Naive thymus-derived CD4-positive, alpha-beta T cell (primary cell): ENCODE measurements at regions of chr5 and their contacts with region 1.

Region 1: DNA sequence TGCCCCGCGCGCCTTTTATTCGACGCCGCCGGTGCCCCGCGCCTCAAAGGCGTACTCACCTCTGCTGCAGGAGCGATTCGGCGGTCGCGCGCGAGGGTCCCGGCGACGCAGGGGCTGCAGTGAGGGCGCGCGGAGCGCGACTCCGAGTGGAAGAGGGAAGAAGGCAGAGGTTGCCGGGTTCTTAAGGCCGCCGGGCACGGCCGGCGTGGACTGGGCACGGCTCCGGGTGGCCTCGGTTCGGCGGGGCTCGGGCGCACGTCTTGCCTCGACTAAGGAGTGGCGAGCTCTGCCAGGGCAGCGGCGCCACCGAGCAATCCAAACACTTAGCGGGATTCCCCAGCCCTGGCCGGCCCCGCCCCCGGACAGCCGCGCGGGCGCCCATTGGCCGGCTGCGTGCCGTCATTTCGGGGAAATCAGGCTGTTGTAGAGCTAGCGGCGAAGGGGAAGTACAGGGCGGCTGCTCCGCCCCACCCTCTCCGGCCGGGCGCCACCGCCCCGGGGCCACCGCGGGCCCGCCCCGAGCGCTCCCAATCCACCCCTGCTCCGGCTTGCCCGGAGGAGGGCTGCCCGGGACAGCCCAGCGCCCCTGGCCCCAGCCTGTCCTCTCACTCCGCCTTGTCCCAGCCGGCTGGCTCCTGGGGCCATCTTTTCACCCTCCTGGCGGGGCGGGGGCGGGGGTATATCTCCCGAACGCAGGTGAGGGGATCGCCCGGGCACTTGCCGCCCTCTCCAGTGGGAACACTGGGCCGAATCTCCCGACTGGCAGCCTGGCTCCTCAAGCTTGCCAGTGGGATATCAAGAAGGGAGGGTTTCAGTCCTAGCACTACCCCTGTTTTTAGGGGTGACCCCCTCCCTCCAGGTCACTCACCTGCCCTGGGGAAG is at the start of gene IRF1:
- DNase-seq: peak; percentile 97 to 100 (median 99)
- ATAC-seq: peak; percentile 89
- H3K4me3 ChIP-seq: peak within 1 kb of the TSS; percentile 78
- H3K4me3 Mint-ChIP-seq: peak within 1 kb of the TSS; percentile 92 to 98 (median 95)
- H3K27ac ChIP-seq: peak within 1 kb of the TSS; percentile 99
- H3K27ac Mint-ChIP-seq: peak within 1 kb of the TSS; percentile 93 to 99 (median 96)
- H3K4me1 ChIP-seq: peaks cover 59 to 65% of the 10 kb centered on the region in 2 donors
- H3K4me1 Mint-ChIP-seq: peaks cover 52 to 78% (median 71%) of the 10 kb centered on the region in 7 donors
- H3K27me3 ChIP-seq: no peaks in the 10 kb centered on the region
- H3K27me3 Mint-ChIP-seq: peaks cover 0 to 2% (median 0%) of the 10 kb centered on the region in 5 donors
- total RNA-seq, gene IRF1: 118 to 632 (median 549) TPM

Region 2: DNA sequence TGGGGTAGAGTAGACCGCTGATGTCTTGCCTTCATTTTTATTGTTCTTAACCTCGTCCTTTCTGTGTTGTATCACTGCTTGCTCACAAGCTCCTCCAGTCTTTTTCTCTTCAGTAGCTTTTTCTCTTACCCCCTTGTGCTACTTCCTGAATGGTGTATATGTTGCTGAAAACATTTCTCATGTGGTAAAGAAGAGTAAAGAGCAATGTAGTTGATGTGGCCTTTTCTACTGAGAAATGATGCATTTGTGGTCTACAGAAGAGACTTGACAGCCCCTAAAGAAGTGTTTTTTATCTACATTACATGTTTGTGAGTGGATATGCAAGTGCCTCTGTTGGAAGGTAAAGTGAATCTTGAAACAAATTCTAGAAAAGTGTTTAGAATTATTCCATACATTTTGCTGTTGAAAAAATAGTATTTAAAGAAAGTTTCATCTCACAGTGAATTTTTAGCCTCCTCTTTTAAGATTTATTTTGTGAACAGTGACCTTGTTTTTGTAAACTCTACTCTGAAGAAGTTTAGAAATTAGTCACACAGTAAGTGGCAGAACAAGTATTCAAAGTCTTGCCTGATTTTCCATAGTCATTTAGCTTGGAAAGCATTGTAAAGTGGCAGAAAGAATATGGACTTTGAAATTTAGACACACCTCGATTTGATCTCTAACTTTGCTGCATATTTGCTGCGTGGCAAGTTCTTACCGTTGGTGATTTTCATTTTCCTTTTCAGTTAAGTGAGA is 1209.4 kb before region 1 on chr5:
- CTCF ChIA-PET with region 1: no interaction called
- POLR2A ChIA-PET with region 1: no interaction called
- intact Hi-C with region 1: loop called in 1 of 2 experiments (anchors 10 kb)
- DNase-seq: peak in 7 of 9 donors; percentile 74 to 94 (median 89)
- ATAC-seq: peak; percentile 91
- H3K4me3 ChIP-seq: peak overlapping the region; percentile 50
- H3K4me3 Mint-ChIP-seq: peak overlapping the region; percentile 72 to 87 (median 80)
- H3K27ac ChIP-seq: peak overlapping the region; percentile 80
- H3K27ac Mint-ChIP-seq: peak overlapping the region; percentile 82 to 98 (median 94)
- H3K4me1 ChIP-seq: peaks cover 65 to 88% of the 10 kb centered on the region in 2 donors
- H3K4me1 Mint-ChIP-seq: peaks cover 42 to 90% (median 80%) of the 10 kb centered on the region in 7 donors
- H3K27me3 ChIP-seq: no peaks in the 10 kb centered on the region
- H3K27me3 Mint-ChIP-seq: peaks cover 0 to 3% (median 0%) of the 10 kb centered on the region in 5 donors

Region 3: GRCh38 chr5:132386644-132387286 is 104.0 kb before region 1 on chr5:
- CTCF ChIA-PET with region 1: interaction called, 243 read pairs
- POLR2A ChIA-PET with region 1: interaction called, 122 read pairs
- intact Hi-C with region 1: no loop called
- DNase-seq: peak; percentile 60 to 81 (median 74)
- ATAC-seq: peak; percentile 88
- H3K4me3 ChIP-seq: no peak overlapping the region
- H3K4me3 Mint-ChIP-seq: peak overlapping the region in 3 of 10 donors; percentile 7 to 47 (median 22)
- H3K27ac ChIP-seq: no peak overlapping the region
- H3K27ac Mint-ChIP-seq: peak overlapping the region; percentile 1 to 83 (median 41)
- H3K4me1 ChIP-seq: peaks cover 15 to 19% of the 10 kb centered on the region in 2 donors
- H3K4me1 Mint-ChIP-seq: peaks cover 20 to 55% (median 29%) of the 10 kb centered on the region in 7 donors
- H3K27me3 ChIP-seq: no peaks in the 10 kb centered on the region
- H3K27me3 Mint-ChIP-seq: no peaks in the 10 kb centered on the region

Region 4: GRCh38 chr5:132426525-132427138 is 64.1 kb before region 1 on chr5:
- CTCF ChIA-PET with region 1: interaction called, 27 read pairs
- POLR2A ChIA-PET with region 1: interaction called, 132 read pairs
- intact Hi-C with region 1: loop called (anchors 1 to 2 kb)
- DNase-seq: peak in 3 of 9 donors; percentile 26 to 71 (median 29)
- ATAC-seq: peak; percentile 63
- H3K4me3 ChIP-seq: peak overlapping the region; percentile 41
- H3K4me3 Mint-ChIP-seq: peak overlapping the region; percentile 60 to 92 (median 75)
- H3K27ac ChIP-seq: peak overlapping the region; percentile 83
- H3K27ac Mint-ChIP-seq: peak overlapping the region; percentile 88 to 99 (median 97)
- H3K4me1 ChIP-seq: peaks cover 97 to 98% of the 10 kb centered on the region in 2 donors
- H3K4me1 Mint-ChIP-seq: peaks cover 78 to 98% (median 97%) of the 10 kb centered on the region in 7 donors
- H3K27me3 ChIP-seq: no peaks in the 10 kb centered on the region
- H3K27me3 Mint-ChIP-seq: no peaks in the 10 kb centered on the region

Region 5: DNA sequence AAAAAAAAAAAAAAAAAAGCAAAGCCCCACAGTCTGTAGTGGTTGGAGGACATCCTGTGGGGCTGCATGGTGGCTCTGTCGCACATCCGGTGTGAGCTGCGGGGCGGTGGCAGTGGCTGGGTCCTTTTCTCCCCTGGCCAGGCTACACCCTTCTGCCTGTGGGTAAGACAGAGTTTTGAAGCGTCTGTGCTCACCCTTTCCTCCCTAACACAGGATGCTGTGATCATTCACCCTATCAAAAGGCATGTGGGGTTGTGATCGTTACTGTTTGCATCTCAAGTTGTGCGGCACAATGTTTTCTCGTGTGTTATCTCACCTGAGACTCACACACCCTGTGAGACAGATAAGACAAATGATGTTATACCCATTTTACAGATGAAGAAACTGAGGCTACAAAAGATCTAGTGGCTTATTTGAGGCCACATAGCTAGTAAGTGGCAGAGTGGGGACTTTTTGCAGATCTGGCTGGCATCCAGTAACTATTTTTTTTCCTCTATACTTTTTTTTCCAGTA is 17.7 kb before region 1 on chr5:
- CTCF ChIA-PET with region 1: interaction called, 46 read pairs
- POLR2A ChIA-PET with region 1: interaction called, 268 read pairs
- intact Hi-C with region 1: loop called (anchors 1 to 2 kb)
- DNase-seq: peak; percentile 53 to 93 (median 88)
- ATAC-seq: peak; percentile 85
- H3K4me3 ChIP-seq: no peak overlapping the region
- H3K4me3 Mint-ChIP-seq: peak overlapping the region in 9 of 10 donors; percentile 2 to 77 (median 68)
- H3K27ac ChIP-seq: peak overlapping the region; percentile 62
- H3K27ac Mint-ChIP-seq: peak overlapping the region; percentile 89 to 97 (median 96)
- H3K4me1 ChIP-seq: peaks cover 48 to 88% of the 10 kb centered on the region in 2 donors
- H3K4me1 Mint-ChIP-seq: peaks cover 45 to 89% (median 87%) of the 10 kb centered on the region in 7 donors
- H3K27me3 ChIP-seq: no peaks in the 10 kb centered on the region
- H3K27me3 Mint-ChIP-seq: no peaks in the 10 kb centered on the region

Region 6: DNA sequence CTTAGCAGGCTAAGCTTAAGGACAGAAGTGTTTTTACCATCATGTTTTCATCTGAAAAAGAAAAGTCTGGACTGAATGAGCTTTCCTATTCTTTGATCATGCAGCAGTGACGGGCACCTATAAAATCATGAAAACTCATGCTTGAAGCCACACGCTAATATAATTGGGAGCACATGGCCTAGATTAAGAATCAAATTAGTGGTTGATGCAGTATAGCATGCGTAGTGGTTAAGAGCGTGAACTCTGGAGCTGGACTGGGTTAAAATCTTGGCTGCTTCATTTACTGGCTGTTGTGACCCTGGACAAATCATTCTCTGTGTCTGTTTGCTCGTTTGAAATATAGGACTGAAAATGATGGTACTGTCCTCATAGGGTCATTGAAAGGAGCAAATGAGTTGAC is 117.4 kb after region 1 on chr5:
- CTCF ChIA-PET with region 1: no interaction called
- POLR2A ChIA-PET with region 1: no interaction called
- intact Hi-C with region 1: no loop called
- DNase-seq: no peak
- ATAC-seq: no peak
- H3K4me3 ChIP-seq: no peak overlapping the region
- H3K4me3 Mint-ChIP-seq: no peak overlapping the region
- H3K27ac ChIP-seq: no peak overlapping the region
- H3K27ac Mint-ChIP-seq: no peak overlapping the region
- H3K4me1 ChIP-seq: no peaks in the 10 kb centered on the region
- H3K4me1 Mint-ChIP-seq: peaks cover 0 to 4% (median 0%) of the 10 kb centered on the region in 7 donors
- H3K27me3 ChIP-seq: no peaks in the 10 kb centered on the region
- H3K27me3 Mint-ChIP-seq: no peaks in the 10 kb centered on the region

Region 7: GRCh38 chr5:132866342-132867045 is 375.8 kb after region 1 on chr5 and contains the starts of genes GDF9 and UQCRQ:
- CTCF ChIA-PET with region 1: interaction called, 3 read pairs
- POLR2A ChIA-PET with region 1: no interaction called
- intact Hi-C with region 1: loop called in 1 of 2 experiments (anchors 2 kb)
- DNase-seq: peak; percentile 72 to 97 (median 93)
- ATAC-seq: peak; percentile 99
- H3K4me3 ChIP-seq: peak within 1 kb of the TSS; percentile 98
- H3K4me3 Mint-ChIP-seq: peak within 1 kb of the TSS; percentile 98 to 100 (median 100)
- H3K27ac ChIP-seq: peak within 1 kb of the TSS; percentile 96
- H3K27ac Mint-ChIP-seq: peak within 1 kb of the TSS; percentile 97 to 100 (median 100)
- H3K4me1 ChIP-seq: peaks cover 7 to 12% of the 10 kb centered on the region in 2 donors
- H3K4me1 Mint-ChIP-seq: peaks cover 11 to 36% (median 27%) of the 10 kb centered on the region in 7 donors
- H3K27me3 ChIP-seq: no peaks in the 10 kb centered on the region
- H3K27me3 Mint-ChIP-seq: peaks cover 0 to 8% (median 0%) of the 10 kb centered on the region in 5 donors
- total RNA-seq, gene GDF9: 0.48 to 2.0 (median 1.6) TPM
- total RNA-seq, gene UQCRQ: 101 to 338 (median 110) TPM

Region 8: GRCh38 chr5:133147411-133147810 is 656.7 kb after region 1 on chr5:
- CTCF ChIA-PET with region 1: no interaction called
- POLR2A ChIA-PET with region 1: no interaction called
- intact Hi-C with region 1: no loop called
- DNase-seq: peak in 3 of 9 donors; percentile 5 to 14 (median 12)
- ATAC-seq: peak; percentile 40
- H3K4me3 ChIP-seq: no peak overlapping the region
- H3K4me3 Mint-ChIP-seq: peak overlapping the region in 3 of 10 donors; percentile 30 to 64 (median 32)
- H3K27ac ChIP-seq: no peak overlapping the region
- H3K27ac Mint-ChIP-seq: peak overlapping the region in 6 of 9 donors; percentile 16 to 81 (median 60)
- H3K4me1 ChIP-seq: peaks cover 0 to 19% of the 10 kb centered on the region in 2 donors
- H3K4me1 Mint-ChIP-seq: peaks cover 5 to 39% (median 22%) of the 10 kb centered on the region in 7 donors
- H3K27me3 ChIP-seq: no peaks in the 10 kb centered on the region
- H3K27me3 Mint-ChIP-seq: no peaks in the 10 kb centered on the region